SK-N-SH (cell line): ENCODE measurements at regions of chr6 and their contacts with region 1.

Region 1: DNA sequence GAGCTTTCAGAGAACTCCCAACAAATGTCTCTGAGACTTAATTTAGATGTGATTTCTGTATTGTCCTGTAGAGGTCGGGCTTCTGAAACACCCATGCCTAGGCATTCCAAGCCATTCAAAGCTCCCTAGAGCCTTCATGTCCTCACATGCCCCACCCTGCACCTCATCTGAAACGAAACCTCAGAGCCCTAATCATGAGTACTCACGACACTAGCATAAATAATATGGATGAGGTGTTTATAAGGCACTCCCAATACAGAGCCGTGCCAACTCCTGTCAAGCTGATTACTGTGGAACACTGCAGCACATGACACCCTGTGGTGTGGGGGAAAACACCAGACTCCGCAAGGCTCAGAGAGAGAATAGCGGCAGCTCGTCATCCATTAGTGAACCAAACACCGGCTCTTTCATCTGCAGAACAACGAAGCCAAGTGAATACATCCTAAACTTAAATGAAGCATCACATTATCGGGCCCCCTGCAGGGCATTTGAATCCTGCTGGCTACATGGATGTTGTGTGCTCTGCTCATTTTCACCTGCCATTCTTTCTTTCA is 83.8 kb downstream of the FNDC1 start:
- DNase-seq: peak; percentile 65
- H3K4me3 ChIP-seq: peak overlapping the region in 1 of 2 experiments; percentile 47; a peak in 2 of 4 replicates
- H3K27ac ChIP-seq: no peak overlapping the region
- H3K4me1 ChIP-seq: peaks cover 0 to 3% of the 10 kb centered on the region in 2 experiments; a peak in 1 of 4 replicates
- H3K27me3 ChIP-seq: no peaks in the 10 kb centered on the region; the same call in 1 of the 2 replicates
- CTCF ChIP-seq: peak; percentile 69
- EP300 ChIP-seq: no peak
- RAD21 ChIP-seq: peak; percentile 60

Region 2: GRCh38 chr6:159174263-159174969 is 78.6 kb before region 1 on chr6:
- CTCF ChIA-PET with region 1: interaction called, 12 read pairs
- POLR2A ChIA-PET with region 1: no interaction called
- DNase-seq: peak; percentile 82
- H3K4me3 ChIP-seq: peak overlapping the region in 1 of 2 experiments; percentile 48; a peak in 1 of 4 replicates
- H3K27ac ChIP-seq: no peak overlapping the region
- H3K4me1 ChIP-seq: peaks cover 0 to 2% of the 10 kb centered on the region in 2 experiments; a peak in 1 of 4 replicates
- H3K27me3 ChIP-seq: peaks cover 61% of the 10 kb centered on the region
- CTCF ChIP-seq: peak; percentile 98
- EP300 ChIP-seq: no peak
- RAD21 ChIP-seq: peak; percentile 92

Region 3: GRCh38 chr6:159233365-159234101 is 19.5 kb before region 1 on chr6:
- CTCF ChIA-PET with region 1: interaction called, 38 read pairs
- POLR2A ChIA-PET with region 1: no interaction called
- DNase-seq: peak; percentile 33
- H3K4me3 ChIP-seq: no peak overlapping the region
- H3K27ac ChIP-seq: no peak overlapping the region
- H3K4me1 ChIP-seq: no peaks in the 10 kb centered on the region
- H3K27me3 ChIP-seq: peaks cover 64% of the 10 kb centered on the region
- CTCF ChIP-seq: no peak
- EP300 ChIP-seq: no peak
- RAD21 ChIP-seq: no peak

Region 4: DNA sequence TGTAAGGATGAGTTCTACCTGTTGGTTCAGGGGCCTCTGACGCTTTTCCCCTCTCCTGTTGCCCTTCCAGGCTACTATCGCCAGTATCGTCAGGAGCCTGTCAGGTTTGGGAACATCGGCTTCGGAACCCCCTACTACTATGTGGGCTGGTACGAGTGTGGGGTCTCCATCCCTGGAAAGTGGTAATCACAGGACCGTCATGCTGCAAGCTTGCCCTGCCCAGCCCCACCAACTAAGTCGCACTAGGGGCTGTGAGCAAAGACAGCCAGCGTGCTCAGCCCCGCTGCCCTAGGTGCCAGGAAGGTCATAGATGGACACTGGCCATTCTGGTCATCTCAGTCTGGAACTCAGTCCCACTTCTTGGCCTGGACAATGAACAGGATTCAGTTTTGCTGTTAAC is 18.2 kb after region 1 on chr6:
- CTCF ChIA-PET with region 1: interaction called, 19 read pairs
- POLR2A ChIA-PET with region 1: no interaction called
- DNase-seq: no peak
- H3K4me3 ChIP-seq: no peak overlapping the region
- H3K27ac ChIP-seq: no peak overlapping the region
- H3K4me1 ChIP-seq: no peaks in the 10 kb centered on the region
- H3K27me3 ChIP-seq: no peaks in the 10 kb centered on the region
- CTCF ChIP-seq: no peak
- EP300 ChIP-seq: no peak
- RAD21 ChIP-seq: no peak

Region 5: GRCh38 chr6:159315562-159315961 is 62.5 kb after region 1 on chr6:
- CTCF ChIA-PET with region 1: interaction called, 13 read pairs
- POLR2A ChIA-PET with region 1: no interaction called
- DNase-seq: no peak
- H3K4me3 ChIP-seq: no peak overlapping the region
- H3K27ac ChIP-seq: no peak overlapping the region
- H3K4me1 ChIP-seq: no peaks in the 10 kb centered on the region; a peak in 1 of 4 replicates
- H3K27me3 ChIP-seq: no peaks in the 10 kb centered on the region
- CTCF ChIP-seq: no peak
- EP300 ChIP-seq: no peak
- RAD21 ChIP-seq: no peak

Region 6: DNA sequence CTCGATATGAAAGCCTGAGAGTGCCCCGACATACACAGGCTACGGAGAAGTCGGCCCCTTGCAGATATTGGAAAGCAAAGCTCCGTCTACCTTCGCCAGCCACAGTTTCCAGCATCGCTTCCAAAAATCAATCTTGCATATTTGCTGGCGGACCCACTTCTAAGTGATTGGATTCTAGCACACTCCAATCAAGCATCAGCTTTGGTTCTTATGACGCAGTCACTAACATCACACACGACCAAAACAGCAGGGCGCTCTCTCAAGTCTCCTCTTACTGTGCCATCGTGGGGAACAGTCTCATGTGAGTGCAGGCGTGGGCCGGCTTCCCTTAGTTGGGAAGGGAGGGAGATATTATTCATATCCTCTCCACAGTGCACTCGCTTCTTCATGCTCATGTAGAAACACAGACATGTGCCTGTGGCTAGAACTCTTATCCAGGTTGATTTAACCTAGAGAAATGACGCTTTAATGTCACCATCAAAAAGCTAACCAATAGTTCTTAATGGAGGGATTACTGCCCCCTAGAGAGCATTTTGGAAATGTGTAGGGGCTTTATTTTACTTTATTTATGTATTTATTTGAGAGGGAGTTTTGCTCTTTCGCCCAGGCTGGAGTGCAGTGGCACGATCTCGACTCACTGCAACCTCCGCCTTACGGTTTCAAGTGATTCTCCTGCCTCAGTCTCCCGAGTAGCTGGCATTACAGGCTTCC is 210.2 kb after region 1 on chr6:
- CTCF ChIA-PET with region 1: interaction called, 107 read pairs
- POLR2A ChIA-PET with region 1: no interaction called
- DNase-seq: peak; percentile 31
- H3K4me3 ChIP-seq: no peak overlapping the region
- H3K27ac ChIP-seq: no peak overlapping the region
- H3K4me1 ChIP-seq: no peaks in the 10 kb centered on the region
- H3K27me3 ChIP-seq: peaks cover 16% of the 10 kb centered on the region; the same call in 1 of the 2 replicates
- CTCF ChIP-seq: peak; percentile 60
- EP300 ChIP-seq: no peak
- RAD21 ChIP-seq: peak; percentile 69

Region 7: GRCh38 chr6:159513074-159513720 is 260.2 kb after region 1 on chr6:
- CTCF ChIA-PET with region 1: no interaction called
- POLR2A ChIA-PET with region 1: no interaction called
- DNase-seq: no peak
- H3K4me3 ChIP-seq: no peak overlapping the region
- H3K27ac ChIP-seq: no peak overlapping the region
- H3K4me1 ChIP-seq: no peaks in the 10 kb centered on the region
- H3K27me3 ChIP-seq: peaks cover 6% of the 10 kb centered on the region; the same call in 1 of the 2 replicates
- CTCF ChIP-seq: no peak
- EP300 ChIP-seq: no peak
- RAD21 ChIP-seq: no peak

Region 8: DNA sequence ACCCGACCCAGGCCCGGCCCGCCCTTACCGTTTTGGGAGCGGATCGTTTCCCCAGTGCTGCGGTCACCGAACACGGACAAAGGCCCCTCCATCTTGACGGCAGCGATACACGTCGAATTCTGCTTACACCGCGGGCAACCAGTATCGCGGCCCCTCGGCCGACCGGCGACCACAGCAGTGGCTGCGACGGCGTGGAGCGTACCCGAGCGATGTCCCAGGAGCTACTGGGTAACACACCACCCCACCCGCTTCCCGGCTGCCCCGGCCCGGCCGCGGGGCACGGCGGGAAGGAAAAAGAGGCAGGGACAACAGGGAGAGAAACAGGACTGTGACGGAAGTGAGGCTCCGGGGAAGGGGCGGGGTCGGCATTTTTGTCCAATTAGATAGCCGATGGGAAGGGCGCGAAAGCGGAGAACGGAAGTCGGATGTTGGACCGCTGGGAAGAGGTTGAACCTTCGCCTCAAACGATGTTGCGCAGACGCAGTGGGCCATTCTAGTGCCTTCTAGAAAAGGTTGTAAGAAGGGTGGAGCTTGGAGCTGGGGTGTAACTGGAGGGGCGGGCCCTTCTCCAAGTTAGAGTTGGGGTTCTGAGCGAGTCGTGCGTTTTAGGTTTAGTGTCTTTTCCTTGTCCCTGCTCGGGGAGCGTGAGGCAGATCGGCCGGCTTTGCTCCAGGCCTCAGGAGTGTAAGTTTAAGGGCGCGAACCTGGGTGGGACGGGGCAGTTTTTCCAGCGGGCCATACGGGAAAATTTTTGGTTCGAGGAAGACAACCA is 536.5 kb after region 1 on chr6 and contains the start of gene TCP1:
- CTCF ChIA-PET with region 1: no interaction called
- POLR2A ChIA-PET with region 1: no interaction called
- DNase-seq: peak; percentile 97
- H3K4me3 ChIP-seq: peak within 1 kb of the TSS; percentile 73 to 90
- H3K27ac ChIP-seq: peak within 1 kb of the TSS; percentile 80 to 94
- H3K4me1 ChIP-seq: peaks cover 10 to 22% of the 10 kb centered on the region in 2 experiments; a peak in 3 of 4 replicates
- H3K27me3 ChIP-seq: no peaks in the 10 kb centered on the region
- CTCF ChIP-seq: no peak
- EP300 ChIP-seq: peak; percentile 12 to 91; a peak in 2 of 4 replicates
- RAD21 ChIP-seq: no peak
- polyA plus RNA-seq, gene TCP1: 138 and 154 TPM in 2 replicates